SK-MEL-5 (cell line): ENCODE measurements at regions of chr7 and their contacts with region 1.

Region 1: DNA sequence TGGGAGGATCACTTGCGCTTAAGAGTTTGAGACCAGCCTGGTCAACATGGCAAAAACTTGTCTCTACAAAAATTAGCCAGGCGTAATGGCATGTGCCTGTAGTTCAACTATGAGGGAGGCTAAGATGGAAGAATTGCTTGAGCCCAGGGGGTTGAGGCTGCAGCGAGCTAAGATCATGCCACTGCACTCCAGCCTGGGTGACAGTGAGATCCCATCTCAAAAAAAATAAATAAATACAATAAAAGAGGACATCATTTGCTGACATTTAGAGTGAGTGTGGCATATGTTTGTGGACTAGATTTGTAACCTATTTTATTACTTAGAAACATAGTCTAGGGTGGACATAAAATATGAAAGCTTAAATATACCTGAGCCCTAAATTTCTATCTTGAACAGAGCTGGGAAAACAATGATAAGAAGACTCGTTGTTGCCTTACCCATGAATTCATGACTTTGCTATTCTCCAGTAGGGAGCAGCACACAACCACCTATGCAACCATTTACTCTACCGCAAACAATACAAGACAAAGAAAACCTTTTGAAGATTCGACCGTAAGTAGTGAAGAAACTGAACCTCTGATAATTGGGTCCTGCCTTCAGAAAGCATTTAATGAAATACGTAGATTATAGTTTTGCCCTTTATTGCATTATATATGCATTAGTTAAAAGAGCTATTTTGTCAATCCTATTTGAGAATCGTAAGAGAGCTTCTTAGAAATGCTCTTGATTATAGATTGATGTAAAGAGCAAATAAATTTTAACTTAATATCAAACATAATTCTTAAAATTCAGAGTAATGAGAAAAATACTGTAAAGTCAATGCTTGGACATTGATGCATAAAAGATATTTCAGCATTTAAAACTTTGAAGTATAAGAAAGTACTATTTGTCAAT is 83.5 kb downstream of the GNAT3 start:
- DNase-seq: peak; percentile 89

Region 2: DNA sequence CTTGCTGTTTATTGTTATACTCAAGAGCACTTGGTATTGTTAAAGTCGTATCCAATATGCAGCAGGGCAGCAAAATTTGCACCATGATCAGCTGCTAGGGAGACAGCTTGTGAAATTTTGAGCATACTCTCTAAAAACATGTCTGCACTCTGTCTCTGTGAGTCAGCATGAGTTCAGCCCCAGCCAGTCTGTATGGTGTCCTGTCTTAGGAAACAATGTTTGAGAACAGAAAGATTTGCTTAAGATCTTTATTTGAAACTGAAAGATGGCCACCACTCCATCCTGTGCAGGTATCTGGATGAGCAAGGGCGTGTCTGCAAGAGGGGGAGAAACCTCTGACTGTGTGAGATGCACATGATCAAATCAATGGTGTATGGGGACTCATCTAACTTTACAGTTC is 196.7 kb before region 1 on chr7:
- in situ Hi-C with region 1: no loop called
- DNase-seq: no peak

Region 3: DNA sequence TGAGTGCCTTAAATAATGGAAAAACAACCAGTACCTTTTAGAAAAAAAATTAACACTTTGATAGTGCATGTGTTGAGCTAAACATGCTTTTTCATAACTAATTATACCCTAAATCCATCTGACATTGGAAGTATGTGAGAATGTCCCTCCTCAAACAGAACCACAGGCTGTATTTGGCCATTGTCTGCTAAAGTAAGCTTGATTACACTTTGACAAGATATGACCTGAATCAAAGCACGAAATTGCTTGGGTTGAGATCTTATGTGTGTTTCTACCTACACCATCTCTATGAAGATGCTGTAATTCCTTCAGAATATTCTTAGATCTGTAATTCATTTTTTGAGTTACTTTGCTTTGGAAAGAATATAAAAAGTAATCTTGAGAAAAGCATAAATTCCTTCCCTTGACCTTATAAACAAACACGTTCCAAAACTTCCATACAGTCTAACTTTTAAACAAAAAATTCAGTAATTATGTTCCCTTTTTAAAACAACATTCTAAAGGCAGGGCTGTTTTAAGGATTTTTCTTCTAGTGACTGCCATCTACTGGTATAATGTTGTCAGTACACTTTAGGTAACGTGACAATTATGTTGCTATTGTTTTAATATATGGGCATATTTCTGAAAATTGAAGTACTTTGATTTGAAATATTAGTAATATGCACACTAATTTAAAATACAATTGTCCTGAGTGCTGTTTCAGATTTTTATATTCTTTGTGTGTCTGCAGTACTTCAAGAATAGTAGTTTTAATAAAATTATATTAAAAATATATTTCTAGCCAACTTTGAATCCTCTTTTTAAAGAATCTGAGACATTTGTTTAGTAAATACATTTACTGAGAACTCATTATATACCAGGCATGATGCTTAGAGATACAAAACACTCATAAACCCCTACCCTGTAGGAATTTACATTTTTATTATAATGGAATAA is 231.0 kb after region 1 on chr7:
- in situ Hi-C with region 1: loop called (anchors 25 kb)
- DNase-seq: peak; percentile 68